Activated T-helper 2 cell treated with anti-CD3 and anti-CD28 coated beads, Interferon-gamma antibody, Interleukin-2, Interleukin-4, amounts not matched to agents 10 μg/mL and 5 μg/mL and 100 μg/mL, durations not matched to agents 14 hours and 24 hours and 36 hours (primary cell): ENCODE measurements at regions of chr7 and their contacts with region 1.

Region 1: DNA sequence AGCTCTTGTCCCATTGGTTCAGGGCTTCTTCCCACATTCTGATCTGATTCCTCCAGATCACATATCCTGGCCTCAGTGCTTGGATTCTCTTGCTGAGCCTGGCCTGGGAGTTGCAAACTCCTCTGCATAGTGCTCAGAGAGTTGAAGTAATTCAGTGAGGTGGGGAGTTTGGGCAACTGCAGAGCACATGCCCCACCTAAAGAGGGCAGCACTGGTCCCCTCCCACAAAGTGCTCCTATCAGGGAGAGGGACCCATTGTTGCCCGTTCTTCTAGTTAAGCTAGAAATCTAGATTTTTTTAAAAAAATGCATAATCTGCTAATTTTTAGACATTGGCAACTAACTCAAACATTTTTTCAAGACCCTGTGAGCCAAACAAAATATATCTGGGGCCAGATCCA is 45.1 kb downstream of the CHN2 start:
- DNase-seq: no peak
- H3K4me3 Mint-ChIP-seq: no peak overlapping the region
- H3K27ac Mint-ChIP-seq: no peak overlapping the region
- H3K4me1 Mint-ChIP-seq: peaks cover 19% of the 10 kb centered on the region
- H3K27me3 Mint-ChIP-seq: peaks cover 36% of the 10 kb centered on the region

Region 2: GRCh38 chr7:29113384-29114103 is 126.1 kb before region 1 on chr7:
- intact Hi-C with region 1: loop called (anchors 10 kb)
- DNase-seq: no peak
- H3K4me3 Mint-ChIP-seq: no peak overlapping the region
- H3K27ac Mint-ChIP-seq: no peak overlapping the region
- H3K4me1 Mint-ChIP-seq: peaks cover 9% of the 10 kb centered on the region
- H3K27me3 Mint-ChIP-seq: peaks cover 24% of the 10 kb centered on the region

Region 3: DNA sequence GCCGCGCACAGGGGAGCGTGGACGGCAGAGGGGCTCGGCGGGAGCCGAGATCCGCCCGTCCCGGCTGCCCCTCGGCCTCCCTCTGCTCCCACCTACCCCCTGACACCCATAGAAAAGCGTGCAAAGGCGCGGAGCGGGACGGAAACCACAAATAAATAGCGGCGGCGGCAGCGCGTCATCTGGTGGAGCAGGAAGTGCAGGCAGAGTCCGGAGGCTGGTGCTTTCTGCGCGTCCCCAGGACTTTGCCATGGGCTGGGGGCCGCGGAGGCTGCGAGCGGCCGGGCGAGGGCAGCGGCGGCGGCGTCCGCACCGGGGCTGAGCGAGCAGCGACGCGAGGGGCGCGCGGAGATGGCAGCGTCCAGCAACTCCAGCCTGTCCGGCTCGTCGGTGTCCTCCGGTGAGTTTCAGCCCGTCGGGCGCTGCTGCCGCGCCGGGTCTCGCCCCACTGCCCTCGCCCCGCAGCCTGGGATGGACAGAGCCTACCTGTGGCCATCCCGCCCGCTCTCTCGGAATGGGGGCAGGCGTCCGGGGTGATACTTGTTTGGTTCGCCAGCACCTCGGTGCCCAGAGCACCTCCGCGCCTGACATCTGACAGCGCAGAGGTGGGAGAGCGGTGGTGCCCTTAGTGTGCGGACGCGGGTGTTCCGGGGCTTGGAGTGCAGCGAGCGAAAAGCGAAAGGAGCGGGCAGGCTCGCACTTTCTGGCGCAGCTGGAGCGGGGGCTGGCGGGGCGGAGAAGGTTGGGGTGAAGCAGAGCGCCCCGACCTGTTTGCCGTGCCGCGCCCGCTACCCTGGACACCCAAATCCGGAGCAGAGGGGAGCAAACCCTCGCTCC is 44.8 kb before region 1 on chr7 and contains the start of gene CHN2:
- intact Hi-C with region 1: loop called (anchors 5 kb)
- DNase-seq: peak; percentile 41
- H3K4me3 Mint-ChIP-seq: peak within 1 kb of the TSS; percentile 81
- H3K27ac Mint-ChIP-seq: no peak within 1 kb of the TSS
- H3K4me1 Mint-ChIP-seq: peaks cover 20% of the 10 kb centered on the region
- H3K27me3 Mint-ChIP-seq: peaks cover 65% of the 10 kb centered on the region
- total RNA-seq, gene CHN2: 0.73 and 0.94 TPM in 2 replicates

Region 4: GRCh38 chr7:29274146-29275017 is 34.7 kb after region 1 on chr7:
- intact Hi-C with region 1: loop called (anchors 1 kb)
- DNase-seq: no peak
- H3K4me3 Mint-ChIP-seq: no peak overlapping the region
- H3K27ac Mint-ChIP-seq: no peak overlapping the region
- H3K4me1 Mint-ChIP-seq: peaks cover 52% of the 10 kb centered on the region
- H3K27me3 Mint-ChIP-seq: peaks cover 26% of the 10 kb centered on the region

Region 5: DNA sequence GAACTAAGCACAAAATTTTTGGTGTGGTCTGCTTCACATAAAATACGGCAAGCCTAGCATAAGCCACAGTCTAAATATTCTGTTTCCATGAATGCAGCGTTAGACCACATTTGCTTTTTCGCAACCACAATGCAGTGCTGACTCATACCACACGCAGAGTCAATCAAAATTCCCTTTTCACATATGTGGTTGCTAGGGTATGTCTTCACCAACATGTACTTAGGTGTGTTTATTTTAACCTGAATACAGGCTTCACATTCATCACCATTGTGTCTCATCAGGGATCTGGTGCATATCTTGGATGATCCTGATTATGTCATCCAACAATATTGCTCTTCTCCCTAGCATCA is 45.8 kb after region 1 on chr7:
- intact Hi-C with region 1: loop called (anchors 1 kb)
- DNase-seq: peak; percentile 54
- H3K4me3 Mint-ChIP-seq: no peak overlapping the region
- H3K27ac Mint-ChIP-seq: no peak overlapping the region
- H3K4me1 Mint-ChIP-seq: peaks cover 47% of the 10 kb centered on the region
- H3K27me3 Mint-ChIP-seq: peaks cover 33% of the 10 kb centered on the region

Region 6: GRCh38 chr7:29408841-29409243 is 169.2 kb after region 1 on chr7:
- intact Hi-C with region 1: loop called (anchors 1 kb)
- DNase-seq: peak; percentile 13
- H3K4me3 Mint-ChIP-seq: no peak overlapping the region
- H3K27ac Mint-ChIP-seq: no peak overlapping the region
- H3K4me1 Mint-ChIP-seq: no peaks in the 10 kb centered on the region
- H3K27me3 Mint-ChIP-seq: peaks cover 4% of the 10 kb centered on the region